PC-3 (cell line): ENCODE measurements at regions of chr14 and their contacts with region 1.

Region 1: GRCh38 chr14:92421751-92422150 is 91.8 kb upstream of the RIN3 start:
- DNase-seq: no peak
- ATAC-seq: no peak
- H3K4me3 ChIP-seq: no peak overlapping the region
- H3K27ac ChIP-seq: no peak overlapping the region
- H3K4me1 ChIP-seq: no peaks in the 10 kb centered on the region
- H3K27me3 ChIP-seq: no peaks in the 10 kb centered on the region
- CTCF ChIP-seq: no peak

Region 2: GRCh38 chr14:92049781-92050180 is 372.0 kb before region 1 on chr14:
- CTCF ChIA-PET with region 1: no interaction called
- POLR2A ChIA-PET with region 1: no interaction called
- intact Hi-C with region 1: no loop called
- DNase-seq: no peak
- ATAC-seq: no peak
- H3K4me3 ChIP-seq: no peak overlapping the region
- H3K27ac ChIP-seq: no peak overlapping the region
- H3K4me1 ChIP-seq: no peaks in the 10 kb centered on the region
- H3K27me3 ChIP-seq: no peaks in the 10 kb centered on the region
- CTCF ChIP-seq: no peak

Region 3: GRCh38 chr14:92264195-92264594 is 157.6 kb before region 1 on chr14:
- CTCF ChIA-PET with region 1: no interaction called
- POLR2A ChIA-PET with region 1: interaction called, 17 read pairs
- intact Hi-C with region 1: no loop called
- DNase-seq: no peak
- ATAC-seq: no peak
- H3K4me3 ChIP-seq: no peak overlapping the region
- H3K27ac ChIP-seq: no peak overlapping the region
- H3K4me1 ChIP-seq: no peaks in the 10 kb centered on the region
- H3K27me3 ChIP-seq: 0 out of 2 replicates have a peak, but pooled peaks cover 4% of the 10 kb centered on the region
- CTCF ChIP-seq: no peak

Region 4: GRCh38 chr14:92400579-92401444 is 20.9 kb before region 1 on chr14:
- CTCF ChIA-PET with region 1: no interaction called
- POLR2A ChIA-PET with region 1: no interaction called
- intact Hi-C with region 1: no loop called
- DNase-seq: no peak
- ATAC-seq: no peak
- H3K4me3 ChIP-seq: no peak overlapping the region
- H3K27ac ChIP-seq: no peak overlapping the region
- H3K4me1 ChIP-seq: peaks cover 26% of the 10 kb centered on the region
- H3K27me3 ChIP-seq: no peaks in the 10 kb centered on the region
- CTCF ChIP-seq: no peak

Region 5: DNA sequence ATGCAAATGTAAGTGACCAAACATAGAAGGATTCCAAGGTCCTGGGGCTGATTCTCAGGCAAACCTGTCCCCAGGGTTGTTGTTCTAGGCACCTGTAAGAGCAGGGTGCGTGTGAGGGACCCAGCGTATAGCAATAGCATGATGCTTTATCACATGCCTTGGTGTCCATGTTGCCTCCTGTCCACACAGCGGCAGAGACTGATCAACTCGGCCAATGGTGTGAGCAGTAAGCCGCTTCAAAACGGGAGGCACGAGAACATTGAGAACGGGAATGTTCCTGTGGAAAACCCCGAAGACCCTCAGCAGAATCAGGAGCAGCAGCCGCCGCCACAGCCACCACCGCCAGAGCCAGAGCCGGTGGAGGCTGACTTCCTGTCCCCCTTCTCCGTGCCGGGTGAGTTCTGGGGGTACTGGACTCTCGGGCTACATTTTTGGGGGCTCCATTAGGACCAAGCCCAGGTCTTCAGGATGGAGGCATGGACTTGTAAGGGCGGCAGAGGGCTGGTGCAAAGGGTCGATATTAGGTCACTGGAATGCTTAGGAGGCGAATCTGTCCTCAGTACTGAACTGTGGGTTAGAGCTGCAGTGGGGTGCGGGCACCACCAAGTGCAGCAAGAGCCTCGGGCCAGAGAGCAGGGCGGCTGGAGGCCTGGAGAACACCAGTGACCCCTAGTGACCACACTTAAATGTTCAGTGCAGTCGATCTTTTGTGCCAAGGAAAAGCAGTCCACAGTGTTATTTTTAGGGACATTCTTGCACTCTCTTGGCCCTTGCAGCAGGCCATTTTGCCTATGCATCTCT is 34.7 kb after region 1 on chr14:
- CTCF ChIA-PET with region 1: no interaction called
- POLR2A ChIA-PET with region 1: no interaction called
- intact Hi-C with region 1: no loop called
- DNase-seq: peak; percentile 73
- ATAC-seq: peak; percentile 85
- H3K4me3 ChIP-seq: no peak overlapping the region
- H3K27ac ChIP-seq: no peak overlapping the region
- H3K4me1 ChIP-seq: no peaks in the 10 kb centered on the region
- H3K27me3 ChIP-seq: no peaks in the 10 kb centered on the region
- CTCF ChIP-seq: peak; percentile 82

Region 6: GRCh38 chr14:92520092-92520745 is 98.5 kb after region 1 on chr14:
- CTCF ChIA-PET with region 1: no interaction called
- POLR2A ChIA-PET with region 1: no interaction called
- intact Hi-C with region 1: no loop called
- DNase-seq: no peak
- ATAC-seq: no peak
- H3K4me3 ChIP-seq: no peak overlapping the region
- H3K27ac ChIP-seq: no peak overlapping the region
- H3K4me1 ChIP-seq: no peaks in the 10 kb centered on the region
- H3K27me3 ChIP-seq: no peaks in the 10 kb centered on the region
- CTCF ChIP-seq: no peak